ENCODE measurements at regions of chr6 and their contacts with region 1.

Region 1: DNA sequence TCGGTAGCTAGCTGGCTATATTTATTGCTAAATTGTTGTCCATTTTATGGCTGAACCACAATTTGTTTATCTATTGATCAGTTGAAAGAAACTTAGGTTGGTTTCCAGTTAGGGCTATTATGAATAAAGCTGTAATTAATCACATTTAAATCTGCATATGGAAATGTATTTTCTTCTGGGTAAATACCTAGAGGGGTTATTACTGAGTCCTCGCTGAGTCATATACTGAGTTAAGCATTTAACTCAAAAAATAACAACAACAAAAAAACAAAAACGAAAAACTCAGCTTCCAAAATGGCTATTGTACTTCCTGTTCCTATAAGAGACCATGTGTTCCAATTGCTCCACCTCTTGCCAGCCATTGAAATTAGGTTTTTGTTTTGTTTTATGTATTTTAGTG is 258.2 kb downstream of the TBC1D32 start:
- DNase-seq: no peak
- ATAC-seq: no peak
- H3K4me3 ChIP-seq: no peak overlapping the region
- H3K4me3 Mint-ChIP-seq: no peak overlapping the region
- H3K27ac ChIP-seq: no peak overlapping the region
- H3K27ac Mint-ChIP-seq: no peak overlapping the region
- H3K4me1 ChIP-seq: no peaks in the 10 kb centered on the region
- H3K4me1 Mint-ChIP-seq: no peaks in the 10 kb centered on the region
- H3K27me3 ChIP-seq: no peaks in the 10 kb centered on the region
- H3K27me3 Mint-ChIP-seq: no peaks in the 10 kb centered on the region
- CTCF ChIP-seq: no peak

Region 2: DNA sequence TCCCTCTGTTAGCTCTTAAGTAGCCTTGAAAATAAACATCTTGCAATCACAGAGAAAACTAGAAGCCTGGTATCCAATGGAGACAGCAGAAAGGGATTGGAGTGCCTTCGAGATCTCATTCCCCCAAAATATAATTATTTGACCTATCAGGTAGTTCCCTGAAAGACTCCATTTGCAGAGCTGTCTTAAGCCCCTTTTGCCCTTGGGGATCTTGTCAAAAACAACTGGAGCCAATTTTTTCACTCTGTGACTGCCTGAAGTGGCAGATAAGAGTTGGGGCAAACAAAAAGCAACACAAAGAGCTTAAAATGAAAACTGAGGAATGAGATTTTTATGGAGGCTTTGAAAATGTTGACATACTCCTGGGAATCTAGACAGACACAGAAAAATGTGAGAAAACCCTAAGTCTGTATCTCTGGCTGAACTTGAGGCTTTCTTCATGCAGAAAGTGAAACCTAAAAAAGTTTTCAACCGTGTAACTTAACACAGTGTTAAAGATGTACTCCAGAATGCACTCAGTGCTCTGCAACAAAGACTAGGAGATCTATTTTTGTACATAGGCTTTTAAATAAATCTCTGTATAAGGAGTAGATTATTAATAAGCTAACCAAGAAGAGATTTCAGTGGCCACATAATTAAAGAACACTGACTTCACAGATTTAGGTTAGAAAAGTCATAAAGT is 755.5 kb before region 1 on chr6:
- CTCF ChIA-PET with region 1: no interaction called
- POLR2A ChIA-PET with region 1: no interaction called
- intact Hi-C with region 1: no loop called
- DNase-seq: no peak
- ATAC-seq: no peak
- H3K4me3 ChIP-seq: no peak overlapping the region
- H3K4me3 Mint-ChIP-seq: no peak overlapping the region
- H3K27ac ChIP-seq: no peak overlapping the region
- H3K27ac Mint-ChIP-seq: no peak overlapping the region
- H3K4me1 ChIP-seq: no peaks in the 10 kb centered on the region
- H3K4me1 Mint-ChIP-seq: no peaks in the 10 kb centered on the region
- H3K27me3 ChIP-seq: no peaks in the 10 kb centered on the region
- H3K27me3 Mint-ChIP-seq: no peaks in the 10 kb centered on the region
- CTCF ChIP-seq: no peak

Region 3: DNA sequence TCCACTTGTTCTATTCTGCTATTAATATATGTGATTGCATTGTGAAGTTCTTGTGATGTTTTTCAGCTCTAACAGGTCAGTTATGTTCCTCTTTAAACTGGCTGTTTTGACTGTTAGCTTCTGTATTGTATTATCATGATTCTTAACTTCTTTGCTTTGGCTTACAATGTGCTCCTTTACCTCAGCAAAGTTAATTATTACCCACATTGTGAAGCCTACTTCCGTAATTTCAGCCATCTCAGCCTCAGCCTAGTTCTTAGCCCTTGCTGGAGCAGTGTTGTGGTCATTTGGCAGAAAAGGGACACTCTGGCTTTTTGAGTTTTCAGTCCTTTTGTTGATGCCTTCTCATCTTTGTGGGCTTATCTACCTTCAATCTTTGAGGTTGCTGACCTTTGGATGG is 182.0 kb before region 1 on chr6:
- CTCF ChIA-PET with region 1: no interaction called
- POLR2A ChIA-PET with region 1: no interaction called
- intact Hi-C with region 1: loop called in 1 of 2 experiments (anchors 5 kb)
- DNase-seq: no peak
- ATAC-seq: no peak
- H3K4me3 ChIP-seq: no peak overlapping the region
- H3K4me3 Mint-ChIP-seq: no peak overlapping the region
- H3K27ac ChIP-seq: no peak overlapping the region
- H3K27ac Mint-ChIP-seq: no peak overlapping the region
- H3K4me1 ChIP-seq: no peaks in the 10 kb centered on the region
- H3K4me1 Mint-ChIP-seq: no peaks in the 10 kb centered on the region
- H3K27me3 ChIP-seq: no peaks in the 10 kb centered on the region
- H3K27me3 Mint-ChIP-seq: no peaks in the 10 kb centered on the region
- CTCF ChIP-seq: no peak

Region 4: DNA sequence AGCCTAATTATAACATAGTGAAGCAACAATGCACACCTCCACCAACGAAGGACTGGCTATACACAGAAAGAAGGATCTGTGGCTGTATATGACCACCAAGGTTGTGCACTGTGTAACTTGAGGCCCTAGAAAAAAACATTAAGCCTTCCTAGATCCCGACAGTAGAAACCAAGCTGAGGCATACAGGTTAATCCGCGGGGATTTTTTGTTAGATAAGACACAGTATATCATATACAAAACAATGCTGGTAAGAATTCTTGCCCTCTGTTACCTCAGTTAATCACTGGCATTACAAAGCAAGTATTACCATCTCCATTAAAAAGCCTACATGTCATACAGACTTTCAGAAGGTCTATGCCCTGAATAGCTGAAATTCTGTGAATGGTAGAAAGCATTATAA is 29.3 kb after region 1 on chr6:
- CTCF ChIA-PET with region 1: no interaction called
- POLR2A ChIA-PET with region 1: no interaction called
- intact Hi-C with region 1: no loop called
- DNase-seq: no peak
- ATAC-seq: no peak
- H3K4me3 ChIP-seq: no peak overlapping the region
- H3K4me3 Mint-ChIP-seq: no peak overlapping the region
- H3K27ac ChIP-seq: no peak overlapping the region
- H3K27ac Mint-ChIP-seq: no peak overlapping the region
- H3K4me1 ChIP-seq: no peaks in the 10 kb centered on the region
- H3K4me1 Mint-ChIP-seq: no peaks in the 10 kb centered on the region
- H3K27me3 ChIP-seq: no peaks in the 10 kb centered on the region
- H3K27me3 Mint-ChIP-seq: no peaks in the 10 kb centered on the region
- CTCF ChIP-seq: no peak

Region 5: DNA sequence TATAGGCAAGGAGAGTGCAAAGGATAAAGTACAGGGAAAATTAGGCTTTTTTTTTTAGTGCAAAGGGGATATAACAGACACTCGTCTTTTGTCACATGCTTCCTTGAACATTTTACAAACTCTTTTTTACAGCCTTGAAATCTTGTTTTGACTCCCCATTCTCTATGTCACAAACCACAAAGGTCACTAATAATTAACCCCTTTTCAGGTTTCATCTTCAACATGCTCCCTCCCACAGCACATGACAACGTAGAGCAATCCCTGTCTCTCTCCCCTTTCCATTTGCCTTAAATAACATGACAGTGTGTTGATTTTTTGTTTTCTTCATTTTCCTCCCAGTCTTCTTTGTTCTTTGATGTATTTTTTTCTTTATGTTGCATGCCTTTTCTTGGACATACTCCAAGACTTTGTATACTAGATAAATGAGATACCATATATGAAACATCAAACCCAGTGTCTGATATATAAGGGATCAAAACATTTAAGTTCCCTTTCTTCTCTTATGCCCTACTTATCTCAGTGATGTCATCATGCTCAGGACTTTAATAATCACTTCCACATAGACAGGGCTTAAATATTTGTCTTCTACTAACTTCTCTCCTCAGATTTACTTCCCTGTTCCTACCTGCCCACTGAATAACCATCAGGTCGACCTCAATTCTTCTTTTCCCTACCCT is 944.6 kb after region 1 on chr6:
- CTCF ChIA-PET with region 1: no interaction called
- POLR2A ChIA-PET with region 1: no interaction called
- intact Hi-C with region 1: no loop called
- DNase-seq: no peak
- ATAC-seq: no peak
- H3K4me3 ChIP-seq: no peak overlapping the region
- H3K4me3 Mint-ChIP-seq: no peak overlapping the region
- H3K27ac ChIP-seq: no peak overlapping the region
- H3K27ac Mint-ChIP-seq: no peak overlapping the region
- H3K4me1 ChIP-seq: no peaks in the 10 kb centered on the region
- H3K4me1 Mint-ChIP-seq: no peaks in the 10 kb centered on the region
- H3K27me3 ChIP-seq: no peaks in the 10 kb centered on the region
- H3K27me3 Mint-ChIP-seq: no peaks in the 10 kb centered on the region
- CTCF ChIP-seq: no peak